Calu3 (cell line): ENCODE measurements at regions of chr12 and their contacts with region 1.

Region 1: GRCh38 chr12:101877816-101878242 is 449 bp downstream of the DRAM1 start:
- DNase-seq: peak; percentile 40
- H3K4me3 Mint-ChIP-seq: peak overlapping the region; percentile 81
- H3K27ac Mint-ChIP-seq: peak overlapping the region; percentile 76
- H3K4me1 Mint-ChIP-seq: peaks cover 9% of the 10 kb centered on the region
- H3K27me3 Mint-ChIP-seq: no peaks in the 10 kb centered on the region
- CTCF ChIP-seq: no peak

Region 2: DNA sequence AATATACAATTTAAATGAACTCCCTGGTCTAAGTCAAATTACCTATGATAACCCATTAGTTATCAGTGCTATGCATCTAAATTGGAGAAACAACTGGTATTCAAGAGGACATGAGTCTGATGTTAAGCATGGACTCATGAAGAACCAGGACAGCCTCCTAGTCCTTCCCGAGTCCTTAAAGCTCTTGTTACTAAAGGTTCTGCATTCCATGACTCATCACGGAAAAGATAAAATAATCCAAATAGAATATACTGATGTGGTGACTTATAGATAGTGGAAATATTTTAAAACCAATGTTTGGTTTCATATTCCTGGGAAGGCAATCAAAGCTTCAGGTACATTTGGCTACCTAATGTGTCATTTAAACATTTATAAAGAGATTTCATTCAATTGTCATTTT is 437.0 kb after region 1 on chr12:
- CTCF ChIA-PET with region 1: no interaction called
- intact Hi-C with region 1: no loop called
- DNase-seq: no peak
- H3K4me3 Mint-ChIP-seq: no peak overlapping the region
- H3K27ac Mint-ChIP-seq: no peak overlapping the region
- H3K4me1 Mint-ChIP-seq: no peaks in the 10 kb centered on the region
- H3K27me3 Mint-ChIP-seq: no peaks in the 10 kb centered on the region
- CTCF ChIP-seq: no peak

Region 3: GRCh38 chr12:103542078-103542477 is 1664.2 kb after region 1 on chr12:
- CTCF ChIA-PET with region 1: interaction called, 13 read pairs
- intact Hi-C with region 1: no loop called
- DNase-seq: no peak
- H3K4me3 Mint-ChIP-seq: no peak overlapping the region
- H3K27ac Mint-ChIP-seq: no peak overlapping the region
- H3K4me1 Mint-ChIP-seq: no peaks in the 10 kb centered on the region
- H3K27me3 Mint-ChIP-seq: peaks cover 30% of the 10 kb centered on the region
- CTCF ChIP-seq: no peak